ENCODE measurements at regions of chr4 and their contacts with region 1.

Region 1: GRCh38 chr4:3285558-3286334 is 7.1 kb upstream of the RGS12 start:
- DNase-seq: no peak
- ATAC-seq: peak in 1 of 8 donors; percentile 25
- H3K4me3 ChIP-seq: no peak overlapping the region
- H3K27ac ChIP-seq: no peak overlapping the region
- H3K4me1 ChIP-seq: peaks cover 0 to 31% (median 20%) of the 10 kb centered on the region in 9 donors
- H3K27me3 ChIP-seq: peaks cover 0 to 17% (median 9%) of the 10 kb centered on the region in 7 donors
- CTCF ChIP-seq: no peak

Region 2: GRCh38 chr4:3765271-3766040 is 479.7 kb after region 1 on chr4:
- intact Hi-C with region 1: loop called in 1 of 10 experiments (anchors 10 kb)
- DNase-seq: peak; percentile 20 to 31
- ATAC-seq: peak; percentile 30 to 68 (median 54)
- H3K4me3 ChIP-seq: peak overlapping the region; percentile 10 to 53 (median 44)
- H3K27ac ChIP-seq: peak overlapping the region in 6 of 10 donors; percentile 15 to 48 (median 36)
- H3K4me1 ChIP-seq: peaks cover 0 to 11% (median 5%) of the 10 kb centered on the region in 9 donors
- H3K27me3 ChIP-seq: peaks cover 0 to 61% (median 48%) of the 10 kb centered on the region in 7 donors
- CTCF ChIP-seq: peak in 6 of 9 donors; percentile 7 to 45 (median 24)

Measured in heart right ventricle (tissue), 16 donors.